Activated CD4-positive, alpha-beta T cell treated with anti-CD3 and anti-CD28 coated beads for 36 hours (primary cell): ENCODE measurements at regions of chr19 and their contacts with region 1.

Region 1: GRCh38 chr19:11639602-11640471 is 42.6 kb downstream of the ZNF627 start:
- DNase-seq: peak; percentile 98
- ATAC-seq: peak; percentile 100
- H3K4me3 Mint-ChIP-seq: peak overlapping the region; percentile 76
- H3K27ac Mint-ChIP-seq: no peak overlapping the region
- H3K4me1 Mint-ChIP-seq: no peaks in the 10 kb centered on the region
- H3K27me3 Mint-ChIP-seq: peaks cover 10% of the 10 kb centered on the region

Region 2: DNA sequence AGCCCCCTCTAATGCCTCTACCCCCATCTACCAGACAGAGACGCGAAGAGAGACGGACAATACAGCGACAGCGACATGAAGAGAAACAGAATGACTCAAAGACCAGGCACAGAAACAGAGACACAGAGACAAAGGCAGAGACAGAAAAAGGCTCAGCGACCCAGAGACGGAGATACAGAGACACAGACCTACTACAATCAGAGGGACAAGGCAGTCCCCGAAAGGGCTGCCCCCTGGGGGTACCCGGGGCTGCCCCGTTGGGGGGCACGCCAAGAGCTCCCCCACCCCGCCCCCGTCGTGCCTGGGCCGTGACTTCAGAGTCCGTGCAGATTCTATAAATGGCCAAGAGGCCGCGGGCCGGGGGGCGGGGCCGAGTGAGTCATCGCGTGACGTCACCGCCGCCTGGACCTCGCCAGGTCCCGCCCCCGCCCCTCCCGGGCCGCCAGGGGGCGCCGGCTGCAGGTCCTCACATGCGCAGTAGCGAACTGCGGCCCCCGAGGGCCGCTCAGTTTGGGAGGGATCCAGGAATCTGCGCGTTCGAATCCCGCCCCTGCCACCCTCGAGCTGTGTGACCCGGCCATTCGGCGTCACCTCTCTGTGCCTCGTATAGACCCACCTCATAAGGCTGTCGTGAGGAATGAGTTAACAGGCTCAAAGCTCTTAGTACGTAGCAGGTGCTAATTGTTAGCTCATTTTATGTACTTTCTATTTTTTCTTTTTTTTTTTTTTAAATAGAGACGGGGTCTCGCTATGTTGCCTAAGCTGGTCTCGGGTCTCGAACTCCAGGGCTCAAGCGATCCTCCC is 103.8 kb before region 1 on chr19:
- CTCF ChIA-PET with region 1: interaction called, 4 read pairs
- POLR2A ChIA-PET with region 1: no interaction called
- intact Hi-C with region 1: loop called in 1 of 2 experiments (anchors 1 kb)
- DNase-seq: peak; percentile 94
- ATAC-seq: peak; percentile 76
- H3K4me3 Mint-ChIP-seq: peak overlapping the region; percentile 2
- H3K27ac Mint-ChIP-seq: peak overlapping the region; percentile 51
- H3K4me1 Mint-ChIP-seq: peaks cover 17% of the 10 kb centered on the region
- H3K27me3 Mint-ChIP-seq: peaks cover 14% of the 10 kb centered on the region

Region 3: DNA sequence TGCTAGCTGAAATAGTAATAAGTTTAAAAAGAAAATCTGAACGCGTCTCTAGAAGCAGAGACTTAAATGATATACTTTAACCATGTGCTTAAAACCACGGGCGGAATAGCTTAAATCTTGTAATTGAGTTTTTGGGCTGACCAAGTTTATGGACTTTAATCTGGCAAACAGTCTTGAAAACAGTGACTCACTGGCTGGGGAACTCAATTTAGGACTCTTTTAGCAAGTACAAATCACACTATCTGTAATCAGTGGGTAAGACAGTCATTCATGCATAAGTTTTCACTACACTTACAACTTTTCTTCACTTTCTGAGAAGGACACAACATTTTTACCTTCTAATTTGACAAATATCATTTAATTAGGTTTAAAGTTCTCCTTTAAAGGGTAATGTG is 15.8 kb before region 1 on chr19:
- CTCF ChIA-PET with region 1: no interaction called
- POLR2A ChIA-PET with region 1: no interaction called
- intact Hi-C with region 1: loop called in 1 of 2 experiments (anchors 2 kb)
- DNase-seq: no peak
- ATAC-seq: peak; percentile 56
- H3K4me3 Mint-ChIP-seq: no peak overlapping the region
- H3K27ac Mint-ChIP-seq: no peak overlapping the region
- H3K4me1 Mint-ChIP-seq: peaks cover 16% of the 10 kb centered on the region
- H3K27me3 Mint-ChIP-seq: peaks cover 14% of the 10 kb centered on the region

Region 4: GRCh38 chr19:11694533-11695439 is 54.9 kb after region 1 on chr19:
- CTCF ChIA-PET with region 1: no interaction called
- POLR2A ChIA-PET with region 1: no interaction called
- intact Hi-C with region 1: loop called in 1 of 2 experiments (anchors 1 kb)
- DNase-seq: peak; percentile 96
- ATAC-seq: peak; percentile 99
- H3K4me3 Mint-ChIP-seq: peak overlapping the region; percentile 84
- H3K27ac Mint-ChIP-seq: peak overlapping the region; percentile 84
- H3K4me1 Mint-ChIP-seq: peaks cover 10% of the 10 kb centered on the region
- H3K27me3 Mint-ChIP-seq: peaks cover 28% of the 10 kb centered on the region